ENCODE measurements at regions of chr12 and their contacts with region 1.

Region 1: GRCh38 chr12:96516472-96517430 is 27.4 kb downstream of the CFAP54 start:
- DNase-seq: peak; percentile 92
- H3K4me3 Mint-ChIP-seq: no peak overlapping the region
- H3K27ac Mint-ChIP-seq: peak overlapping the region; percentile 44
- H3K4me1 Mint-ChIP-seq: peaks cover 15% of the 10 kb centered on the region
- H3K27me3 Mint-ChIP-seq: no peaks in the 10 kb centered on the region

Region 2: GRCh38 chr12:95998611-95999286 is 518.0 kb before region 1 on chr12:
- CTCF ChIA-PET with region 1: interaction called, 11 read pairs
- POLR2A ChIA-PET with region 1: no interaction called
- intact Hi-C with region 1: no loop called
- DNase-seq: peak; percentile 65
- H3K4me3 Mint-ChIP-seq: no peak overlapping the region
- H3K27ac Mint-ChIP-seq: no peak overlapping the region
- H3K4me1 Mint-ChIP-seq: peaks cover 9% of the 10 kb centered on the region
- H3K27me3 Mint-ChIP-seq: no peaks in the 10 kb centered on the region

Region 3: GRCh38 chr12:96208801-96209549 is 307.8 kb before region 1 on chr12:
- CTCF ChIA-PET with region 1: interaction called, 18 read pairs
- POLR2A ChIA-PET with region 1: no interaction called
- intact Hi-C with region 1: no loop called
- DNase-seq: peak; percentile 15
- H3K4me3 Mint-ChIP-seq: peak overlapping the region; percentile 30
- H3K27ac Mint-ChIP-seq: peak overlapping the region; percentile 93
- H3K4me1 Mint-ChIP-seq: peaks cover 95% of the 10 kb centered on the region
- H3K27me3 Mint-ChIP-seq: no peaks in the 10 kb centered on the region

Region 4: GRCh38 chr12:96445691-96446583 is 70.8 kb before region 1 on chr12:
- CTCF ChIA-PET with region 1: interaction called, 15 read pairs
- POLR2A ChIA-PET with region 1: no interaction called
- intact Hi-C with region 1: loop called (anchors 2 kb)
- DNase-seq: peak; percentile 72
- H3K4me3 Mint-ChIP-seq: peak overlapping the region; percentile 60
- H3K27ac Mint-ChIP-seq: peak overlapping the region; percentile 95
- H3K4me1 Mint-ChIP-seq: peaks cover 38% of the 10 kb centered on the region
- H3K27me3 Mint-ChIP-seq: no peaks in the 10 kb centered on the region

Region 5: DNA sequence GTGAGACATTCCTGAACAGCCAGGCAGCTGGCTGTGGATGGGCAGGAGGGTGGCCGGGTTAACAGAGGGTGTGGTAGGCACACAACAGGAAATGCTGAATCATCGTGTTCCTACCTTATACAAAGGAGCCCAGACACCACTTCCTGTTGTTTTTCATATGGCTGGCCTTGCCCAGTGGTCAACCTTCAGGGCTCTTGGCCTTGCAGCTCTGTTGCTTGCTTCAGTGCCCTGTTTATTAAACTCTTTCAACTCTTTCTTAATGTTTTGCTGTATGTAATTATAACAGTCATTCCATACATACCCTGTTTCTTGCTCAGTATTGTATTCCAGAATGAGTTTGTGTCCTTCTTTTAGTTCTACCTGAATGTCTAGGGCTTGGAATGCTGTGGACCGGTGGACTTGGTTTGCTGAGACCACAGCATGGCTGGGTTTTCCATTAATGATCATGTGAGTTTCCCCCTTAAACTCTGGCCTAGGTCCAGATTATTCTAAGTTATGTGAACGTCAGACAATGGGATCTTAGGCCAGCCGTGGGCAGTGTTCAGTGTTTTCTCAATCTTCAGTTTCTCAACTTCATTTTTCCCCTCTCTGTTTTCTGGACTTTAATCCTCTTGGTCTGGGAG is 15.5 kb before region 1 on chr12:
- CTCF ChIA-PET with region 1: interaction called, 13 read pairs
- POLR2A ChIA-PET with region 1: interaction called, 4 read pairs
- intact Hi-C with region 1: no loop called
- DNase-seq: peak; percentile 56
- H3K4me3 Mint-ChIP-seq: no peak overlapping the region
- H3K27ac Mint-ChIP-seq: peak overlapping the region; percentile 84
- H3K4me1 Mint-ChIP-seq: peaks cover 39% of the 10 kb centered on the region
- H3K27me3 Mint-ChIP-seq: no peaks in the 10 kb centered on the region

Region 6: GRCh38 chr12:97784904-97785303 is 1268.2 kb after region 1 on chr12:
- CTCF ChIA-PET with region 1: no interaction called
- POLR2A ChIA-PET with region 1: no interaction called
- intact Hi-C with region 1: no loop called
- DNase-seq: no peak
- H3K4me3 Mint-ChIP-seq: no peak overlapping the region
- H3K27ac Mint-ChIP-seq: no peak overlapping the region
- H3K4me1 Mint-ChIP-seq: no peaks in the 10 kb centered on the region
- H3K27me3 Mint-ChIP-seq: no peaks in the 10 kb centered on the region